Ovary (tissue), 10 donors: ENCODE measurements at regions of chr11 and their contacts with region 1.

Region 1: DNA sequence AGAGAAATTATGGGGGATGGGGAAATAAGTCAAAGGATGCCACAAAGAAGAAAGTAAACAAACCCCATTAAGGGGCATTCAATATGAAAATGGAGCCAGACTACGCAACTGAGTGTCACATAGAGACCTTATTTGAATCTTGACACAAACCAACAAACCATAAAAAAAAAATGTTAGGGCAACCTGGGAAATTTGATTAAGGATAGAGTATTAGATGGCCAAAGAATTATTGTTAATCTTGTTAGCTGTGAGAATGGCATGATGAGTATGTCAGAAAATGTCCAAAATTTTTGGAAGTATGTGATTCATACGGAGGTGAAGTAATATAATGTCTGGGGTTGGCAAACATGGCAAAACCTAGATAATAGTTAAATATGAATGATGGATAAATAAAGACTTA is 322.1 kb upstream of the MPPED2 start:
- DNase-seq: no peak
- H3K4me3 ChIP-seq: no peak overlapping the region
- H3K27ac ChIP-seq: no peak overlapping the region
- H3K4me1 ChIP-seq: no peaks in the 10 kb centered on the region
- H3K27me3 ChIP-seq: no peaks in the 10 kb centered on the region
- CTCF ChIP-seq: no peak
- EP300 ChIP-seq: no peak
- POLR2A ChIP-seq: no peak

Region 2: GRCh38 chr11:30724274-30724673 is 184.0 kb before region 1 on chr11:
- intact Hi-C with region 1: loop called in 1 of 4 experiments (anchors 5 kb)
- DNase-seq: no peak
- H3K4me3 ChIP-seq: no peak overlapping the region
- H3K27ac ChIP-seq: no peak overlapping the region
- H3K4me1 ChIP-seq: peaks cover 3% of the 10 kb centered on the region
- H3K27me3 ChIP-seq: no peaks in the 10 kb centered on the region
- CTCF ChIP-seq: no peak
- EP300 ChIP-seq: no peak
- POLR2A ChIP-seq: no peak

Region 3: GRCh38 chr11:30992513-30992849 is 84.2 kb after region 1 on chr11:
- intact Hi-C with region 1: no loop called
- DNase-seq: no peak
- H3K4me3 ChIP-seq: no peak overlapping the region
- H3K27ac ChIP-seq: no peak overlapping the region
- H3K4me1 ChIP-seq: no peaks in the 10 kb centered on the region
- H3K27me3 ChIP-seq: no peaks in the 10 kb centered on the region
- CTCF ChIP-seq: no peak
- EP300 ChIP-seq: no peak
- POLR2A ChIP-seq: no peak